ENCODE measurements at regions of chr14 and their contacts with region 1.

Region 1: DNA sequence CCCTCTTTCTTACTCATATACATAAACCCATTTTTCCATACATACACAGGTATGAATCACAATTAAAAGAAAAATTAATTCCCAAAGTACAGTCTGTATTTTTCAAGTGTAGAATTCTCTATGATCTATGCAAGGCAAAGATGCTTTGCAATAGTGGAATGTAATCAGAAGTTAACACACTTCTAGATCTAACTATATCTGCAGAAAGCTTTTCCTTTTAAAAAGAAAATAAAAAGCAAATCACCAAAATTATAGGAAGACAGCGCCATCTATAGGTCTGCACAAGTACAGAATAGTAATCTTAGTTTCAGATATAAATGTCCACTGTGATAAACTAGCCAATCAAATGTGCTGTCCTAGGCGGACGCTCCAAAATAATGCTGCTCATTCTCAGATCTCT is 22.0 kb downstream of the SLC25A21 start:
- DNase-seq: peak; percentile 44 to 50
- ATAC-seq: peak; percentile 82 to 91; a peak in 5 of 6 replicates
- H3K4me3 ChIP-seq: no peak overlapping the region
- H3K27ac ChIP-seq: no peak overlapping the region
- H3K4me1 ChIP-seq: no peaks in the 10 kb centered on the region
- CTCF ChIP-seq: peak; percentile 82
- EP300 ChIP-seq: no peak
- POLR2A ChIP-seq: no peak
- RAD21 ChIP-seq: peak; percentile 75 to 81

Region 2: GRCh38 chr14:36655963-36656686 is 494.3 kb before region 1 on chr14:
- CTCF ChIA-PET with region 1: interaction called, 130 read pairs
- POLR2A ChIA-PET with region 1: no interaction called
- DNase-seq: peak; percentile 66 to 77
- ATAC-seq: peak; percentile 92 to 94
- H3K4me3 ChIP-seq: peak overlapping the region; percentile 33
- H3K27ac ChIP-seq: peak overlapping the region; percentile 15 to 82; a peak in 4 of 6 replicates
- H3K4me1 ChIP-seq: peaks cover 4% of the 10 kb centered on the region; the same call in 1 of the 3 replicates
- CTCF ChIP-seq: peak; percentile 82
- EP300 ChIP-seq: no peak
- POLR2A ChIP-seq: no peak
- RAD21 ChIP-seq: peak; percentile 40 to 56

Region 3: DNA sequence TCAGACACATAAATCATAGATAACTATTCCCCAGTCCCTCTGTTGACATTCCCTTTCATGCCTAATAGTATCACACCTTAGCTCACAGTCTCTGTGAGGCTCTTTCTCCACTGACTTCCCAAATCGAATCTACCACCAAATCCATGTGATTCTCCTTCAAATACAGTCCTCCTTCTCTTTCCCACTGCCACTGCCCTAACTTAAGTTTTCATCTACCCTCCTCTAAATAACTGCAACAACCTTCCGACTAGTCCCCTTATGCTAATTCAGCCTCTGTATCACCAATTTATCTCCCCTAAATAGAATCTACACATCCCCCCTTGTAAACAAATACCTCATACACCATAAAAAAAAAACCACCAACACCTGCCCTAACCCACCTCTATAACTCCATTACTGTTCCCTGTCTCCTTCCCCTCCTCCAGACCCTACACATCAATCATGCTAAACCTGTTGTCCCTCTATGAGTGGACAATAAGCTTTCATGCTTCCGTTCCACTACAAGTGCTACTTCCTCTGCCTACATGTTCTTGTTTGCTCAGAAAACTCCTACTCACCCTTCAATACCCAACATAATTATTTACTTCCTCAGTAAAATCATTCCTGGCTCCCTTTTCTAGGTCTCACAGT is 17.0 kb before region 1 on chr14:
- CTCF ChIA-PET with region 1: interaction called, 32 read pairs
- POLR2A ChIA-PET with region 1: no interaction called
- DNase-seq: no peak
- ATAC-seq: no peak
- H3K4me3 ChIP-seq: no peak overlapping the region
- H3K27ac ChIP-seq: no peak overlapping the region
- H3K4me1 ChIP-seq: no peaks in the 10 kb centered on the region
- CTCF ChIP-seq: no peak
- EP300 ChIP-seq: no peak
- POLR2A ChIP-seq: no peak
- RAD21 ChIP-seq: no peak

Region 4: GRCh38 chr14:37172024-37172869 is 21.8 kb after region 1 on chr14 and contains the start of gene SLC25A21:
- CTCF ChIA-PET with region 1: interaction called, 11 read pairs
- POLR2A ChIA-PET with region 1: interaction called, 4 read pairs
- DNase-seq: peak; percentile 90 to 91
- ATAC-seq: peak; percentile 97 to 98
- H3K4me3 ChIP-seq: peak within 1 kb of the TSS; percentile 59
- H3K27ac ChIP-seq: peak within 1 kb of the TSS; percentile 82 to 89
- H3K4me1 ChIP-seq: peaks cover 7% of the 10 kb centered on the region; the same call in 2 of the 3 replicates
- CTCF ChIP-seq: no peak
- EP300 ChIP-seq: no peak
- POLR2A ChIP-seq: peak; percentile 84
- RAD21 ChIP-seq: peak in 1 of 2 experiments; percentile 16; a peak in 1 of 5 replicates
- polyA plus RNA-seq, gene SLC25A21: 1.3 and 1.4 TPM in 2 replicates

Region 5: GRCh38 chr14:37253905-37254304 is 103.5 kb after region 1 on chr14:
- CTCF ChIA-PET with region 1: no interaction called
- POLR2A ChIA-PET with region 1: no interaction called
- DNase-seq: no peak
- ATAC-seq: no peak
- H3K4me3 ChIP-seq: no peak overlapping the region
- H3K27ac ChIP-seq: no peak overlapping the region
- H3K4me1 ChIP-seq: peaks cover 19% of the 10 kb centered on the region; the same call in 2 of the 3 replicates
- CTCF ChIP-seq: no peak
- EP300 ChIP-seq: no peak
- POLR2A ChIP-seq: no peak
- RAD21 ChIP-seq: no peak